ENCODE measurements at regions of chr11 and their contacts with region 1.

Region 1: GRCh38 chr11:66222358-66223149 is 45.9 kb upstream of the RAB1B start:
- DNase-seq: peak; percentile 88 to 96 (median 92)
- H3K4me3 ChIP-seq: no peak overlapping the region
- H3K27ac ChIP-seq: no peak overlapping the region
- H3K4me1 ChIP-seq: no peaks in the 10 kb centered on the region
- H3K27me3 ChIP-seq: no peaks in the 10 kb centered on the region
- CTCF ChIP-seq: peak; percentile 94 to 100 (median 99)
- POLR2A ChIP-seq: no peak

Region 2: GRCh38 chr11:66258473-66258893 is 35.9 kb after region 1 on chr11:
- intact Hi-C with region 1: loop called in 1 of 2 experiments (anchors 2 kb)
- DNase-seq: no peak
- H3K4me3 ChIP-seq: peak overlapping the region in 2 of 4 donors; percentile 70 to 95
- H3K27ac ChIP-seq: peak overlapping the region in 2 of 5 donors; percentile 66 to 86
- H3K4me1 ChIP-seq: peaks cover 4 to 15% of the 10 kb centered on the region in 2 donors
- H3K27me3 ChIP-seq: no peaks in the 10 kb centered on the region
- CTCF ChIP-seq: peak in 2 of 6 experiments; percentile 11 to 15
- POLR2A ChIP-seq: no peak

Region 3: GRCh38 chr11:66282468-66283386 is 60.2 kb after region 1 on chr11:
- intact Hi-C with region 1: loop called (anchors 5 to 10 kb)
- DNase-seq: peak; percentile 99 to 100 (median 99)
- H3K4me3 ChIP-seq: no peak overlapping the region
- H3K27ac ChIP-seq: no peak overlapping the region
- H3K4me1 ChIP-seq: peaks cover 3 to 21% of the 10 kb centered on the region in 2 donors
- H3K27me3 ChIP-seq: no peaks in the 10 kb centered on the region
- CTCF ChIP-seq: peak; percentile 93 to 99 (median 99)
- POLR2A ChIP-seq: no peak

Region 4: GRCh38 chr11:66371627-66372415 is 149.3 kb after region 1 on chr11 and contains the start of gene SLC29A2:
- intact Hi-C with region 1: no loop called
- DNase-seq: peak in 5 of 7 donors; percentile 35 to 44 (median 38)
- H3K4me3 ChIP-seq: peak within 1 kb of the TSS in 3 of 4 donors; percentile 11 to 78 (median 42)
- H3K27ac ChIP-seq: peak within 1 kb of the TSS in 3 of 5 donors; percentile 7 to 30 (median 17)
- H3K4me1 ChIP-seq: peaks cover 5 to 21% of the 10 kb centered on the region in 2 donors
- H3K27me3 ChIP-seq: peaks cover 12% of the 10 kb centered on the region
- CTCF ChIP-seq: no peak
- POLR2A ChIP-seq: no peak
- total RNA-seq, gene SLC29A2: 0.84 to 2.5 (median 1.2) TPM in 8 of 9 donors, not detected in the other

Region 5: DNA sequence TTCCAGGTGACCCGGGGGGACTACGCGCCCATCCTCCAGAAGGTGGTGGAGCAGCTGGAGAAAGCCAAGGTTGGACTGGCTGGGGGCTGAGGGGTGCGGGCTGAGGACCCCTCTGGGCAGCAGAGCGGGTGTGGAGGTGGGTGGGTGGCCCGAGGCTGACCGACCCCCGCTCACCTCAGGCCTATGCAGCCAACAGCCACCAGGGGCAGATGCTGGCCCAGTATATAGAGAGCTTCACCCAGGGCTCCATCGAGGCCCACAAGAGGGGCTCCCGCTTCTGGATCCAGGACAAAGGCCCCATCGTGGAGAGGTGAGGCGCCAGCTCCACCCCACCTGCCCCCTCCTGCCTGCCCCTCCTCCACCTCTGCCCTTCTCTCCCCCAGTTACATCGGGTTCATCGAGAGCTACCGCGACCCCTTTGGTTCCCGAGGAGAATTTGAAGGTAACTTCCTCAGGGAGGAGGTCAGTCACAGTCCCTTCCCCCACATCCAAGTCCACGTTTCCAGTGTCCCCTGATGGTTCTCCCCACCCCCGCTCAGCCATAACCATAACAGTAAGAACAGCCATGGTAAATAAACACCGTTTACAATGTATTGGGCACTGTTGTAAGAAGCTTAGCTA is 268.9 kb after region 1 on chr11:
- intact Hi-C with region 1: no loop called
- DNase-seq: no peak
- H3K4me3 ChIP-seq: no peak overlapping the region
- H3K27ac ChIP-seq: no peak overlapping the region
- H3K4me1 ChIP-seq: no peaks in the 10 kb centered on the region
- H3K27me3 ChIP-seq: no peaks in the 10 kb centered on the region
- CTCF ChIP-seq: peak in 3 of 6 experiments; percentile 8 to 17 (median 13)
- POLR2A ChIP-seq: no peak

Region 6: DNA sequence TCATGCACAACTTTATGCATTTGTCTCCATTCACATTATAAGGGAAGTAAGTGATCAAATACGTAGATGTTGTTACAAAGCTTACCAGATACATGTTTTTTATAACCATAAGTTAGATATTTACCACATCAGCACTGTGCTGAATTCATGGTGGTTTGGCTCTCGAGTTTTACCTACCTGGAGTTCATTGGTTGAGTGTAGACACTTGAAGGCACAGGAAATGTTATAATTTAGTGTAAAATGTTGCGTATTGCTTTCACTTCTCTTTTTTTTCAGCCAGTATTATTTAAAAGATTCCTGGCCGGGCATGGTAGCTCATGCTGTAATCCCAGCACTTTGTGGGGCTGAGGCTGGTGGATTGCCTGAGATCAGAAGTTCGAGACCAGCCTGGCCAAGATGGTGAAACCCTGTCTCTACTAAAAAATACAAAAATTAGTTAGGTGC is 990.6 kb after region 1 on chr11:
- intact Hi-C with region 1: no loop called
- DNase-seq: no peak
- H3K4me3 ChIP-seq: no peak overlapping the region
- H3K27ac ChIP-seq: peak overlapping the region in 1 of 5 donors; percentile 1
- H3K4me1 ChIP-seq: peaks cover 0 to 12% of the 10 kb centered on the region in 2 donors
- H3K27me3 ChIP-seq: no peaks in the 10 kb centered on the region
- CTCF ChIP-seq: no peak
- POLR2A ChIP-seq: no peak

Measured in adrenal gland (tissue), 19 donors.